ENCODE measurements at regions of chr5 and their contacts with region 1.

Region 1: GRCh38 chr5:126926187-126926586 is 104.2 kb downstream of the MARCHF3 start:
- DNase-seq: no peak
- H3K4me3 Mint-ChIP-seq: no peak overlapping the region
- H3K27ac Mint-ChIP-seq: no peak overlapping the region
- H3K4me1 Mint-ChIP-seq: no peaks in the 10 kb centered on the region
- H3K27me3 Mint-ChIP-seq: no peaks in the 10 kb centered on the region
- CTCF ChIP-seq: no peak

Region 2: DNA sequence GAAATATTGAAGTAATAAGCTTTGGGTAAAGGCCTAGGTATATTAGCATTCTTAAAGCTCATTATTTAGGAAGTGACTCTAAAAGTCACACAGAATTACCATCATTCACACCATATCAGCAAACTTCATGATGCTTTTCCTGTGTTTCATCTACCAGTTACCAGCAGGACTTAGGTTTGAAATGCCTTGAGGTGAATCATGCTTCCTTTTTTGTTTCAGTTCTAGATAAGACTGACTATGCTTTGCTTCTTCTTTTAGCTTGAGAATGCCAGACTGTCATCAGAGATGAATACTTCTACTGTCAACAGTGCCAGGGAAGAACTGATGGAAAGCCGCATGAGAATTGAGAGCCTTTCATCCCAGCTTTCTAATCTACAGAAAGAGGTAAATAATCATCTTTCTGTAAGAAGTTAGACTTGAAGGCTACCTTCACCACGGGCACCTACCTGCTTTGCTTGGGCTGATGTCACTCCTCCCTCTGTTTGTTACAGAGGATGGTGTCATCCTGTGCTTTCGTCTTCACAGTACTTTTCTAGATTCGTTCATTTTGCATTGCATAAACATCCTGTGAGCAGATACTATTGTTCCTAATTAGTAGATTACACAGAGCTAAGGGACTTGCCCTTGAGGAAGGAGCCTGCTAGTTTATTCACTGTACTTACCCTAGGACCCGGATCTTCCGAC is 114.5 kb before region 1 on chr5:
- CTCF ChIA-PET with region 1: no interaction called
- POLR2A ChIA-PET with region 1: no interaction called
- intact Hi-C with region 1: no loop called
- DNase-seq: no peak
- H3K4me3 Mint-ChIP-seq: no peak overlapping the region
- H3K27ac Mint-ChIP-seq: peak overlapping the region; percentile 27
- H3K4me1 Mint-ChIP-seq: peaks cover 5% of the 10 kb centered on the region
- H3K27me3 Mint-ChIP-seq: no peaks in the 10 kb centered on the region
- CTCF ChIP-seq: no peak

Region 3: GRCh38 chr5:126914801-126915436 is 11.3 kb before region 1 on chr5:
- CTCF ChIA-PET with region 1: interaction called, 10 read pairs
- POLR2A ChIA-PET with region 1: interaction called, 3 read pairs
- intact Hi-C with region 1: no loop called
- DNase-seq: no peak
- H3K4me3 Mint-ChIP-seq: no peak overlapping the region
- H3K27ac Mint-ChIP-seq: no peak overlapping the region
- H3K4me1 Mint-ChIP-seq: peaks cover 18% of the 10 kb centered on the region
- H3K27me3 Mint-ChIP-seq: no peaks in the 10 kb centered on the region
- CTCF ChIP-seq: no peak

Region 4: GRCh38 chr5:126972062-126972895 is 46.1 kb after region 1 on chr5:
- CTCF ChIA-PET with region 1: no interaction called
- POLR2A ChIA-PET with region 1: no interaction called
- intact Hi-C with region 1: no loop called
- DNase-seq: no peak
- H3K4me3 Mint-ChIP-seq: no peak overlapping the region
- H3K27ac Mint-ChIP-seq: no peak overlapping the region
- H3K4me1 Mint-ChIP-seq: peaks cover 24% of the 10 kb centered on the region
- H3K27me3 Mint-ChIP-seq: no peaks in the 10 kb centered on the region
- CTCF ChIP-seq: no peak